ENCODE measurements at regions of chr13 and their contacts with region 1.

Region 1: GRCh38 chr13:29508130-29508875 is 87.2 kb downstream of the SLC7A1 start:
- DNase-seq: peak; percentile 77
- H3K4me3 Mint-ChIP-seq: no peak overlapping the region
- H3K27ac Mint-ChIP-seq: no peak overlapping the region
- H3K4me1 Mint-ChIP-seq: peaks cover 8% of the 10 kb centered on the region
- H3K27me3 Mint-ChIP-seq: no peaks in the 10 kb centered on the region

Region 2: GRCh38 chr13:29496240-29496712 is 12.0 kb before region 1 on chr13:
- CTCF ChIA-PET with region 1: interaction called, 12 read pairs
- POLR2A ChIA-PET with region 1: no interaction called
- DNase-seq: no peak
- H3K4me3 Mint-ChIP-seq: no peak overlapping the region
- H3K27ac Mint-ChIP-seq: no peak overlapping the region
- H3K4me1 Mint-ChIP-seq: peaks cover 9% of the 10 kb centered on the region
- H3K27me3 Mint-ChIP-seq: peaks cover 12% of the 10 kb centered on the region

Region 3: DNA sequence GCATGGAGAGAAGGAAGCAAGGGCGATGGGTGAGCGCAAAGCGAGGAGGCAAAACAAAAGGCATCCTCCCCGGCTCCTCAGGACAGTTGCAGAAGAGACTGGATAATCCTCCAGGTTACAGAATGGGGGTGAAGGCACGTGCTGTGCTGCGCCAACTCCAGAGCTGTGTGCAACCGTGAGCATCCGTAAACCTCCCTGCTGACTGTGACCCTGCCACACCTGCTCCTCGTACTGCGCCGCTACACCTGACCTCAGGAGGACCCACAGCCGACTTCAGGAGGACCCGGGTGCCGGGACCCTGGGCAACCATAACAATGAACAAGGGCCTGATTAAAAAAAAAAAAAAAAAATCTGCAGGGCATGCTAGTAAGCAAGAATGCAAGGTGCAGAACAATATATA is 18.4 kb after region 1 on chr13:
- CTCF ChIA-PET with region 1: interaction called, 12 read pairs
- POLR2A ChIA-PET with region 1: no interaction called
- DNase-seq: no peak
- H3K4me3 Mint-ChIP-seq: no peak overlapping the region
- H3K27ac Mint-ChIP-seq: no peak overlapping the region
- H3K4me1 Mint-ChIP-seq: peaks cover 8% of the 10 kb centered on the region
- H3K27me3 Mint-ChIP-seq: no peaks in the 10 kb centered on the region

Region 4: GRCh38 chr13:29707876-29708543 is 199.7 kb after region 1 on chr13:
- CTCF ChIA-PET with region 1: interaction called, 57 read pairs
- POLR2A ChIA-PET with region 1: interaction called, 4 read pairs
- DNase-seq: peak; percentile 43
- H3K4me3 Mint-ChIP-seq: no peak overlapping the region
- H3K27ac Mint-ChIP-seq: no peak overlapping the region
- H3K4me1 Mint-ChIP-seq: no peaks in the 10 kb centered on the region
- H3K27me3 Mint-ChIP-seq: peaks cover 31% of the 10 kb centered on the region

Region 5: GRCh38 chr13:29713839-29714238 is 205.5 kb after region 1 on chr13:
- CTCF ChIA-PET with region 1: interaction called, 57 read pairs
- POLR2A ChIA-PET with region 1: interaction called, 4 read pairs
- DNase-seq: no peak
- H3K4me3 Mint-ChIP-seq: no peak overlapping the region
- H3K27ac Mint-ChIP-seq: no peak overlapping the region
- H3K4me1 Mint-ChIP-seq: peaks cover 9% of the 10 kb centered on the region
- H3K27me3 Mint-ChIP-seq: peaks cover 26% of the 10 kb centered on the region